ENCODE measurements at regions of chr7 and their contacts with region 1.

Region 1: GRCh38 chr7:66681491-66682349 is 53.0 kb downstream of the KCTD7 start:
- DNase-seq: peak; percentile 87 to 98 (median 97)
- ATAC-seq: peak; percentile 93
- H3K4me3 ChIP-seq: peak overlapping the region; percentile 98
- H3K4me3 Mint-ChIP-seq: peak overlapping the region; percentile 93
- H3K27ac ChIP-seq: peak overlapping the region; percentile 99 to 100
- H3K27ac Mint-ChIP-seq: peak overlapping the region; percentile 97
- H3K4me1 ChIP-seq: peaks cover 13% of the 10 kb centered on the region
- H3K4me1 Mint-ChIP-seq: peaks cover 35% of the 10 kb centered on the region
- H3K27me3 ChIP-seq: no peaks in the 10 kb centered on the region
- H3K27me3 Mint-ChIP-seq: no peaks in the 10 kb centered on the region
- CTCF ChIP-seq: no peak

Region 2: GRCh38 chr7:65981965-65982792 is 699.5 kb before region 1 on chr7 and contains the start of gene GUSB:
- CTCF ChIA-PET with region 1: no interaction called
- POLR2A ChIA-PET with region 1: no interaction called
- intact Hi-C with region 1: loop called in 1 of 2 experiments (anchors 2 kb)
- DNase-seq: peak; percentile 80 to 93 (median 90)
- ATAC-seq: peak; percentile 87
- H3K4me3 ChIP-seq: peak within 1 kb of the TSS; percentile 83 to 90
- H3K4me3 Mint-ChIP-seq: peak within 1 kb of the TSS; percentile 85
- H3K27ac ChIP-seq: peak within 1 kb of the TSS; percentile 69 to 73
- H3K27ac Mint-ChIP-seq: peak within 1 kb of the TSS; percentile 88
- H3K4me1 ChIP-seq: peaks cover 18% of the 10 kb centered on the region
- H3K4me1 Mint-ChIP-seq: peaks cover 14% of the 10 kb centered on the region
- H3K27me3 ChIP-seq: no peaks in the 10 kb centered on the region
- H3K27me3 Mint-ChIP-seq: no peaks in the 10 kb centered on the region
- CTCF ChIP-seq: no peak
- total RNA-seq, gene GUSB: 37.0 to 41.8 TPM

Region 3: GRCh38 chr7:66591799-66592596 is 89.7 kb before region 1 on chr7:
- CTCF ChIA-PET with region 1: no interaction called
- POLR2A ChIA-PET with region 1: no interaction called
- intact Hi-C with region 1: loop called in 1 of 2 experiments (anchors 2 kb)
- DNase-seq: peak; percentile 69 to 95 (median 91)
- ATAC-seq: peak; percentile 98
- H3K4me3 ChIP-seq: peak overlapping the region; percentile 73 to 95
- H3K4me3 Mint-ChIP-seq: peak overlapping the region; percentile 99
- H3K27ac ChIP-seq: peak overlapping the region; percentile 67 to 89
- H3K27ac Mint-ChIP-seq: peak overlapping the region; percentile 98
- H3K4me1 ChIP-seq: peaks cover 37% of the 10 kb centered on the region
- H3K4me1 Mint-ChIP-seq: peaks cover 49% of the 10 kb centered on the region
- H3K27me3 ChIP-seq: no peaks in the 10 kb centered on the region
- H3K27me3 Mint-ChIP-seq: no peaks in the 10 kb centered on the region
- CTCF ChIP-seq: no peak

Region 4: GRCh38 chr7:66628361-66629140 is 53.2 kb before region 1 on chr7 and contains the start of gene KCTD7:
- CTCF ChIA-PET with region 1: no interaction called
- POLR2A ChIA-PET with region 1: interaction called, 8 read pairs
- intact Hi-C with region 1: loop called (anchors 1 kb)
- DNase-seq: peak; percentile 91 to 98 (median 94)
- ATAC-seq: peak; percentile 89
- H3K4me3 ChIP-seq: peak within 1 kb of the TSS; percentile 91 to 99
- H3K4me3 Mint-ChIP-seq: peak within 1 kb of the TSS; percentile 89
- H3K27ac ChIP-seq: peak within 1 kb of the TSS; percentile 89 to 97
- H3K27ac Mint-ChIP-seq: peak within 1 kb of the TSS; percentile 91
- H3K4me1 ChIP-seq: peaks cover 42% of the 10 kb centered on the region
- H3K4me1 Mint-ChIP-seq: peaks cover 51% of the 10 kb centered on the region
- H3K27me3 ChIP-seq: no peaks in the 10 kb centered on the region
- H3K27me3 Mint-ChIP-seq: no peaks in the 10 kb centered on the region
- CTCF ChIP-seq: no peak
- total RNA-seq, gene KCTD7: 12.9 to 13.2 TPM

Region 5: DNA sequence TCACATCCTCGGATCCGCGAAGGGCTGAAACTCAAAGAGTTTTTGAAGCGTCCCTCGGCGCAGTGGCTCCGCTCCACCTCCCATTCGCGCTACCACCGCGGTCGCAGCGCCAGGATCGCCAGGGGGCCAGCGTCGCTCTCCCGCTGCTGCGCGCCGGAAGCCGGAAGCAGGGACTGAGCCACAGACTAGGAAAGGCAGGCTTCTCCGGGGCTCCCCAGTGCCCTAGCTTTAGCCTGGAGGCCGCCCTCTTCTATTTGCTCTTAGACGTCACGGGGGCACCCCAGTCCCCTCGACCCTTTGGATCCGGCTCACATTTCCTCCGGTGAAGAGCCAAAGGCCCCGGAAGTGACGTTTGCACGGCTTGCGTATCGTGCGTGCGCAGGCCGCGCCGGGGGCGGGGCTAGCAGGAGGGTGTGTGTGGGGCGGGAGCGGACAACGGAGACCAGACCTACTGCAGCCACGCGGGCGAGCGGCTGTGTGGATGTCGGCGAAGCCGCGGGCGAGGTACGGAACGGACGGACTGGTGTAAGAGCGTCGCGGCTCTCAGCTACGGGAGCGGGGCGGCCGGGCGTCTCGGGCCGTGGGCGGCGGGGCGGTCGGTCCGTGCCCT is 27.5 kb before region 1 on chr7:
- CTCF ChIA-PET with region 1: no interaction called
- POLR2A ChIA-PET with region 1: interaction called, 3 read pairs
- intact Hi-C with region 1: loop called (anchors 1 kb)
- DNase-seq: peak; percentile 94 to 99 (median 98)
- ATAC-seq: peak; percentile 91
- H3K4me3 ChIP-seq: peak overlapping the region; percentile 64 to 86
- H3K4me3 Mint-ChIP-seq: peak overlapping the region; percentile 99
- H3K27ac ChIP-seq: peak overlapping the region; percentile 92 to 98
- H3K27ac Mint-ChIP-seq: peak overlapping the region; percentile 99
- H3K4me1 ChIP-seq: peaks cover 7% of the 10 kb centered on the region
- H3K4me1 Mint-ChIP-seq: peaks cover 24% of the 10 kb centered on the region
- H3K27me3 ChIP-seq: no peaks in the 10 kb centered on the region
- H3K27me3 Mint-ChIP-seq: no peaks in the 10 kb centered on the region
- CTCF ChIP-seq: no peak

Measured in CD8-positive, alpha-beta T cell (primary cell).